ENCODE measurements at regions of chr6 and their contacts with region 1.

Region 1: DNA sequence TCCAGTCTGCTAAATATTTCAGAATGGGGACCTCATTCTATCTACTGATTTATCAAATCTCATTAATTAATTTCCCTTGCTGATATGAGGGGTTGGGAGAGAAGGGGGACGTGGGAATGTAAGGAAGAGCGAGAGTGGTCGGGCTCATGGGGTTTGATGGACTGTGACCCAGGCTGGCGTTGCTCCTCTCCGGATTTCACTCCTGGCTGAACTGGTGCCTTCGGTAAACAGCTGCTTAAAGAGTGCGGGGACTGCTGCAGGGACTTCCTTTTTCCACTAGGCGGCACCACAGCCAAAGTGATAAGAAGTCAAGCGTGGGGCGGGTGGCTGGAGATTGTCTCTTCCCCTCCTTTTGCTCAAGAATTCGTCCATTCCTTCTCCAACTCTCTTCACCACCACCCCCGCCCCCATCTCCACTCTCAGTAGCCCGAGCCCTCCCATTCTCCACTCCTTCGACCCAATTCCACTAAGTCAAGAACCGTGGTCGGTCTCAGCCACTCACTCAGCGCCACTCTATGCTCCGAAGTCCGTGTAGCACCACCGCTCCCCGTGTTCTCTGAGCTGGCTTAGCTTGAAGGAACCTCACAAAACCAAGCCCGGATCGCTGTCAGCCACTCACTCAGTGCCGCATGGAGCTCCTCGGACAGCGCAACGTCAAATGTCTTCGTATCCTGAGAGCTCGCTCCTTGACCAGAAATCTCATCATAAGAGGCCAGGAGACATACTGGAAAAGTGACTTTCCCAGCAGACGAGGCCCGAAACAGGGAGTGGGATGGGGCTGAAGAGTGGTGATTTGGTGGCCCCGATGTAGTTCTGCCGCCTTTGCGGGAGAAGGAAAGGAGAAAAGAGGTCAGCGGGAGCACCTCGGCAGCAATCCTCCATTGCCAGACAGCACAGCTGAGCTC is 9.7 kb downstream of the TRIM31 start:
- DNase-seq: peak; percentile 71 to 91 (median 79)
- ATAC-seq: peak; percentile 88
- H3K4me3 ChIP-seq: peak overlapping the region; percentile 60
- H3K4me3 Mint-ChIP-seq: peak overlapping the region; percentile 89
- H3K27ac ChIP-seq: no peak overlapping the region
- H3K27ac Mint-ChIP-seq: peak overlapping the region; percentile 65
- H3K4me1 ChIP-seq: peaks cover 44% of the 10 kb centered on the region
- H3K4me1 Mint-ChIP-seq: peaks cover 46% of the 10 kb centered on the region
- H3K27me3 ChIP-seq: peaks cover 19 to 21% of the 10 kb centered on the region in 2 experiments
- H3K27me3 Mint-ChIP-seq: peaks cover 61% of the 10 kb centered on the region
- CTCF ChIP-seq: peak; percentile 85

Region 2: DNA sequence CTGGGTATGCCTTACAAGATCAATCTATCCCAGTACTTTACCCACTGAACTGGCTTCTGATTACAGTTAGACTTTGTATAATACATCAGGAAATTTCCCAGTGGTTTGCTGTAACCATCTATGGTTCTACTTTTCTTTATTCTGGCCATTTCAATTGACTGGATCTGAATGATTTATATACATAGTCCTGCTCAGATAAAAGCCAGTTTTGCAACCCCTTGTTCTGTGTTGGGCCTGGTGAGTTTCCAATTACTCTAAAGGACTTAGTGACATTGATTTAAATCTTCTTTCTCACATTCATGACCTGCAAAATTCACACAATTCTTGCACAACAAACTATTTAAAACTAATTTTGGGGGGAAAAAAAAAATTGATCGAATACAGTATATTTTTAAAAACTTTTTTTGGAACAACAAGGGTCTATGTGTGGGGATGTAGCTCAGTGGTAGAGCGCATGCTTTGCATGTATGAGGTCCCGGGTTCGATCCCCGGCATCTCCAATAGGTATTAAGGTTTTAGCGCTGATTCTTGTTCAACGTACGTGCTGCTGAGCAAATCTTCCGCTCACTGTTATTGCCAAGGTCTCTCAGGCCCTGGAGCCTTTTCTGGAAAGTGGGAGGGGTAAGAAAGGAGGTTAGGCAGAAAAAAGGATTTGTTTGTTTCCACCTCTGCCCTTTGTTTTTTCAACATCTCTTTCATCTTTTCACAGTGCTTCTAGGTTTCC is 1460.0 kb before region 1 on chr6:
- CTCF ChIA-PET with region 1: no interaction called
- POLR2A ChIA-PET with region 1: no interaction called
- intact Hi-C with region 1: no loop called
- DNase-seq: no peak
- ATAC-seq: no peak
- H3K4me3 ChIP-seq: no peak overlapping the region
- H3K4me3 Mint-ChIP-seq: no peak overlapping the region
- H3K27ac ChIP-seq: no peak overlapping the region
- H3K27ac Mint-ChIP-seq: no peak overlapping the region
- H3K4me1 ChIP-seq: peaks cover 3% of the 10 kb centered on the region
- H3K4me1 Mint-ChIP-seq: peaks cover 4% of the 10 kb centered on the region
- H3K27me3 ChIP-seq: peaks cover 28 to 40% of the 10 kb centered on the region in 2 experiments
- H3K27me3 Mint-ChIP-seq: peaks cover 56% of the 10 kb centered on the region
- CTCF ChIP-seq: no peak

Region 3: GRCh38 chr6:30061092-30061857 is 41.9 kb before region 1 on chr6 and contains the start of gene POLR1H:
- CTCF ChIA-PET with region 1: interaction called, 6 read pairs
- POLR2A ChIA-PET with region 1: interaction called, 17 read pairs
- intact Hi-C with region 1: loop called in 1 of 2 experiments (anchors 2 kb)
- DNase-seq: peak; percentile 72 to 96 (median 84)
- ATAC-seq: peak; percentile 86
- H3K4me3 ChIP-seq: peak within 1 kb of the TSS; percentile 89
- H3K4me3 Mint-ChIP-seq: peak within 1 kb of the TSS; percentile 95
- H3K27ac ChIP-seq: peak within 1 kb of the TSS; percentile 89 to 94
- H3K27ac Mint-ChIP-seq: peak within 1 kb of the TSS; percentile 97
- H3K4me1 ChIP-seq: peaks cover 29% of the 10 kb centered on the region
- H3K4me1 Mint-ChIP-seq: peaks cover 46% of the 10 kb centered on the region
- H3K27me3 ChIP-seq: no peaks in the 10 kb centered on the region
- H3K27me3 Mint-ChIP-seq: no peaks in the 10 kb centered on the region
- CTCF ChIP-seq: no peak
- total RNA-seq, gene POLR1H: 36.5 to 39.4 TPM

Region 4: GRCh38 chr6:30130887-30131862 is 28.0 kb after region 1 on chr6:
- CTCF ChIA-PET with region 1: interaction called, 198 read pairs
- POLR2A ChIA-PET with region 1: interaction called, 22 read pairs
- intact Hi-C with region 1: loop called (anchors 1 kb)
- DNase-seq: peak; percentile 45 to 92 (median 60)
- ATAC-seq: peak; percentile 98
- H3K4me3 ChIP-seq: no peak overlapping the region
- H3K4me3 Mint-ChIP-seq: no peak overlapping the region
- H3K27ac ChIP-seq: no peak overlapping the region
- H3K27ac Mint-ChIP-seq: no peak overlapping the region
- H3K4me1 ChIP-seq: peaks cover 13% of the 10 kb centered on the region
- H3K4me1 Mint-ChIP-seq: peaks cover 5% of the 10 kb centered on the region
- H3K27me3 ChIP-seq: peaks cover 37 to 58% of the 10 kb centered on the region in 2 experiments
- H3K27me3 Mint-ChIP-seq: peaks cover 71% of the 10 kb centered on the region
- CTCF ChIP-seq: peak; percentile 100

Region 5: DNA sequence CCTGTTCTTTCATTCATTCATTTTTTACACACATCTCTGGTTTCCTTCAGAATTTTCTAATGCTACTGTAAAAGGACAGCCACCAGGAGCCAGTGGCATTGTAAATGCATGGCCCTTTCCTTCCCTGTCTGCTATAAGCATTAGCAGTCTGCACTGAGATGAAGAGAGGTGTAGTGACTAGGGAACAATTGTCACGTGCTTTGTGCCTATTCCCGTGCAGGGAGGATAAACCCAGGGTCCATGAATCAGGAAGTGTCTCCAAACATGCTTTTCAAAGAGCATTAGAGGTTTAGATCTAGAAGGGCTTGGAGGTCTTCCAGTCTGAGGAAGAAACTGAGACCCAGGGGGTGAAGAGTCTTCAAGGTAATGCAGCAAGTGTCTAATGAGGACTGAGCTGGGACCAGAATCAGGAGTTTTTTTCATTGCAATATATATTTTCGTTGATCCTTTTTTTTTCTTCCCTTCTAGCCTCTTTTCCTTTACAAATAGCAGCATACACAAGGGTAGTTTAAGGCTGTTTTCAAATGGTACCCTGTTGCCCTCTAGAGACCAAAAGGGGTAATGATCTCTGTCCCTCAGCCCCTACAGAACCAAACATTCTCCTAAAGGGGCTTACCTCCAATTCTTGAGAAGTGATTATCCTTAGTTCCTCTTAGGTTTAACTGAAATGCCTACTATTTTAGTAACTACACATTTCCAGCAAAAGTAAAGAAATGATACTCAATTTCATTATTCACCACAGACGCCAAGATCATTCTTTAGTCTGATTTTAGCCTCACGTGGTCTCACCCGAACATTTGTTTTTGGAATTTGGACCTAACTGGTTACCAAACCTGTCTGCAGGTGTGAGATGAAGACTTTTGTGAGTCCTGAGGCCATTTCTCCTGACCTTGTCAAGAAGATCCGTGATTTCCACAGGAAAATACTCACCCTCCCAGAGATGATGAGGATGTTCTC is 66.7 kb after region 1 on chr6:
- CTCF ChIA-PET with region 1: no interaction called
- POLR2A ChIA-PET with region 1: no interaction called
- intact Hi-C with region 1: loop called (anchors 1 to 2 kb)
- DNase-seq: peak in 4 of 14 experiments; percentile 11 to 67 (median 58)
- ATAC-seq: peak; percentile 81
- H3K4me3 ChIP-seq: no peak overlapping the region
- H3K4me3 Mint-ChIP-seq: no peak overlapping the region
- H3K27ac ChIP-seq: no peak overlapping the region
- H3K27ac Mint-ChIP-seq: no peak overlapping the region
- H3K4me1 ChIP-seq: peaks cover 16% of the 10 kb centered on the region
- H3K4me1 Mint-ChIP-seq: no peaks in the 10 kb centered on the region
- H3K27me3 ChIP-seq: peaks cover 32 to 48% of the 10 kb centered on the region in 2 experiments
- H3K27me3 Mint-ChIP-seq: peaks cover 62% of the 10 kb centered on the region
- CTCF ChIP-seq: peak; percentile 78

Region 6: DNA sequence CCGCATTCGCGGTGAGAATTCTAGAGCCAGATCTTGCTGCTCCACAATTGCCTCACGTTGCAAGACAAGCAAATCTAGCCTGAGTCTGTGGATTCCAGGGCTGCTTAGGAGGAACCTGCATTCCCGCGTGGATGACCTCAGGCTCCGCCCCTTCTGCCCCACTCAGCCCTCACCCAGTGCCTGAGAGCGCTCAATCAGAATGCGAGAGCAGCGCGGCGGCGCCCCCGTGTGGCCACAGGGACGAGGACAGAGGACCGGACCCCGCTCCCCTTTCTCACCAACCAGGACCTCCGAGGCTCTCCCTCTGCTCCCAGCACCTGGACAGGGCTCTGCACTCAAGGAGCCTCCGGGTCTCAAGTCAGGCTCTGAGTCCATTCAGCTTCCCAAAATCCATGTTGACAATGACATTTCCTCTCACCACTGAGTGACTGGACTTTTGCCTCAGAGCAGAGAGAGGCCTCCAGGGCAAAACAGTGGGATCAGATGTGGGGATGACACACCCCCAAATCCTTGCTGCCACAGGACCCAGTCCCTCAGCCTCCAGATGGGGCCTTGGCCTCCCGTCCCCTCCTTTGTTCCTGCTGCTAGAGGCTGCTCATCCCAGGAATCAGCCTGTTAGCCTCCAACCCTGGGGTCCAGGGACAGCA is 293.7 kb after region 1 on chr6:
- CTCF ChIA-PET with region 1: no interaction called
- POLR2A ChIA-PET with region 1: no interaction called
- intact Hi-C with region 1: loop called (anchors 2 to 5 kb)
- DNase-seq: peak; percentile 76 to 92 (median 83)
- ATAC-seq: peak; percentile 99
- H3K4me3 ChIP-seq: no peak overlapping the region
- H3K4me3 Mint-ChIP-seq: no peak overlapping the region
- H3K27ac ChIP-seq: no peak overlapping the region
- H3K27ac Mint-ChIP-seq: no peak overlapping the region
- H3K4me1 ChIP-seq: peaks cover 7% of the 10 kb centered on the region
- H3K4me1 Mint-ChIP-seq: no peaks in the 10 kb centered on the region
- H3K27me3 ChIP-seq: peaks cover 18 to 20% of the 10 kb centered on the region in 2 experiments
- H3K27me3 Mint-ChIP-seq: peaks cover 51% of the 10 kb centered on the region
- CTCF ChIP-seq: peak; percentile 94

Measured in CD4-positive, alpha-beta T cell (primary cell).